Naive thymus-derived CD4-positive, alpha-beta T cell (primary cell): ENCODE measurements at regions of chrX and their contacts with region 1.

Region 1: DNA sequence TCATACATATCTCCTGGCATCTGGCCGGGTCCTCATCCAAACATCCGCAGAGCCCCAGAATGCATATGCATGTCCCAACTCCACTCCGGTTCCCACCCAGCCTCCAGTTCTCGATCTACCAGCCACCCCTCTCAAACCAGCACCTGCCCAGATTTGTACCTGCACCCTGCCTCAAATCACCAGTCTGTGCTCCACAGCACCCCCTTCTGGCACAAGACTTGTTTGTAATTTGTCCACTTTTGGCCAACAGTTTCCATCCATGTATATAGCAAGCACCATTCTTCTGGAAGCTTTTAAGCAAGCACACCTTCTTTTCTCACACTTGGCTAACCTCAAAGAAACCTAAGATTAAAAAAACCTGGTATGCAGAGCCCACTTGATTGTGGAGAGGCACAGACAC is 644.1 kb downstream of the MID1IP1 start:
- DNase-seq: peak in 4 of 9 donors; percentile 7 to 28 (median 25)
- ATAC-seq: no peak
- H3K4me3 ChIP-seq: no peak overlapping the region
- H3K4me3 Mint-ChIP-seq: no peak overlapping the region
- H3K27ac ChIP-seq: no peak overlapping the region
- H3K27ac Mint-ChIP-seq: peak overlapping the region in 2 of 9 donors; percentile 10 to 50
- H3K4me1 ChIP-seq: peaks cover 3 to 4% of the 10 kb centered on the region in 2 donors
- H3K4me1 Mint-ChIP-seq: peaks cover 19 to 46% (median 32%) of the 10 kb centered on the region in 7 donors
- H3K27me3 ChIP-seq: no peaks in the 10 kb centered on the region
- H3K27me3 Mint-ChIP-seq: no peaks in the 10 kb centered on the region

Region 2: GRCh38 chrX:39162322-39162735 is 283.0 kb before region 1 on chrX:
- CTCF ChIA-PET with region 1: no interaction called
- POLR2A ChIA-PET with region 1: no interaction called
- intact Hi-C with region 1: loop called (anchors 10 kb)
- DNase-seq: peak in 8 of 9 donors; percentile 17 to 47 (median 35)
- ATAC-seq: peak; percentile 83
- H3K4me3 ChIP-seq: no peak overlapping the region
- H3K4me3 Mint-ChIP-seq: peak overlapping the region; percentile 35 to 84 (median 77)
- H3K27ac ChIP-seq: no peak overlapping the region
- H3K27ac Mint-ChIP-seq: peak overlapping the region in 2 of 9 donors; percentile 50 to 81
- H3K4me1 ChIP-seq: no peaks in the 10 kb centered on the region
- H3K4me1 Mint-ChIP-seq: peaks cover 0 to 20% (median 10%) of the 10 kb centered on the region in 7 donors
- H3K27me3 ChIP-seq: no peaks in the 10 kb centered on the region
- H3K27me3 Mint-ChIP-seq: peaks cover 0 to 11% (median 5%) of the 10 kb centered on the region in 5 donors

Region 3: DNA sequence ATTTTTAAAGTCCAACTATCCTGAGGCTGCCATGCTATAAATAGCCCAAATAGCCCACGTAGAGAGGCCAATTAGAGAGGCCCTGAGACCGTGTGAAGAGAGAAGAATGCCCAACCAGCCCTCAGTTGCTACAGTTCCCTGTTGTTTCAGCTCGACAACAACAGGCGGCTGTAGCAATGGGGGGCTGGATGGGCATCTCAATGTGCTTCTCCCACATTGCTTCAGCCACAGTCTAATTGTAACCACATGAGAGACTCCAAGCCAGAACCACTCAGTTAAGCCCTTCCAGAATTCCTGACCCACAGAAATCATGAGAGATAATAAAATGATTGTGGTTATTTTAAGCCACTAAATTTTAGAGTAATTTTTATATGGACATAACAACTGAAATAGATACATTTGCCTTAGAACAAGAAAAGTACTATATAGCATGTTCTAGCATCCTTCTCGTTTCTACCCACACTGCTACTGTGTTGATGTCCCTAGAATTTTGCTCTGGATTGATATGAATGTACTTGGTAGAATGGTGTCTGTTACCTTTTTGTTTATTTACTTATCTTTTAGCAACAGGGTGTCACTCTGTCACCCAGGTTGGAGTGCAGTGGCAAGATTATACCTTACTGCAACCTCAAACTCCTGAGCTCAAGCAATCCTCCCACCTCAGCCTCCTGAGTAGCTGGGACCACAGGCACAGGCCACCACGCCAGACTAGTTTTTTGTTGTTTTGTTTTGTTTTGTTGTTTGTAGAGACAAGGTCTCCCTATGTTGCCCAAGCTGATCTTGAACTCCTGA is 216.0 kb after region 1 on chrX:
- CTCF ChIA-PET with region 1: no interaction called
- POLR2A ChIA-PET with region 1: no interaction called
- intact Hi-C with region 1: no loop called
- DNase-seq: no peak
- ATAC-seq: no peak
- H3K4me3 ChIP-seq: no peak overlapping the region
- H3K4me3 Mint-ChIP-seq: no peak overlapping the region
- H3K27ac ChIP-seq: no peak overlapping the region
- H3K27ac Mint-ChIP-seq: no peak overlapping the region
- H3K4me1 ChIP-seq: no peaks in the 10 kb centered on the region
- H3K4me1 Mint-ChIP-seq: no peaks in the 10 kb centered on the region
- H3K27me3 ChIP-seq: no peaks in the 10 kb centered on the region
- H3K27me3 Mint-ChIP-seq: no peaks in the 10 kb centered on the region

Region 4: GRCh38 chrX:39677978-39678791 is 232.8 kb after region 1 on chrX:
- CTCF ChIA-PET with region 1: no interaction called
- POLR2A ChIA-PET with region 1: no interaction called
- intact Hi-C with region 1: no loop called
- DNase-seq: no peak
- ATAC-seq: no peak
- H3K4me3 ChIP-seq: no peak overlapping the region
- H3K4me3 Mint-ChIP-seq: no peak overlapping the region
- H3K27ac ChIP-seq: no peak overlapping the region
- H3K27ac Mint-ChIP-seq: peak overlapping the region in 1 of 9 donors; percentile 25
- H3K4me1 ChIP-seq: no peaks in the 10 kb centered on the region
- H3K4me1 Mint-ChIP-seq: no peaks in the 10 kb centered on the region
- H3K27me3 ChIP-seq: no peaks in the 10 kb centered on the region
- H3K27me3 Mint-ChIP-seq: no peaks in the 10 kb centered on the region

Region 5: DNA sequence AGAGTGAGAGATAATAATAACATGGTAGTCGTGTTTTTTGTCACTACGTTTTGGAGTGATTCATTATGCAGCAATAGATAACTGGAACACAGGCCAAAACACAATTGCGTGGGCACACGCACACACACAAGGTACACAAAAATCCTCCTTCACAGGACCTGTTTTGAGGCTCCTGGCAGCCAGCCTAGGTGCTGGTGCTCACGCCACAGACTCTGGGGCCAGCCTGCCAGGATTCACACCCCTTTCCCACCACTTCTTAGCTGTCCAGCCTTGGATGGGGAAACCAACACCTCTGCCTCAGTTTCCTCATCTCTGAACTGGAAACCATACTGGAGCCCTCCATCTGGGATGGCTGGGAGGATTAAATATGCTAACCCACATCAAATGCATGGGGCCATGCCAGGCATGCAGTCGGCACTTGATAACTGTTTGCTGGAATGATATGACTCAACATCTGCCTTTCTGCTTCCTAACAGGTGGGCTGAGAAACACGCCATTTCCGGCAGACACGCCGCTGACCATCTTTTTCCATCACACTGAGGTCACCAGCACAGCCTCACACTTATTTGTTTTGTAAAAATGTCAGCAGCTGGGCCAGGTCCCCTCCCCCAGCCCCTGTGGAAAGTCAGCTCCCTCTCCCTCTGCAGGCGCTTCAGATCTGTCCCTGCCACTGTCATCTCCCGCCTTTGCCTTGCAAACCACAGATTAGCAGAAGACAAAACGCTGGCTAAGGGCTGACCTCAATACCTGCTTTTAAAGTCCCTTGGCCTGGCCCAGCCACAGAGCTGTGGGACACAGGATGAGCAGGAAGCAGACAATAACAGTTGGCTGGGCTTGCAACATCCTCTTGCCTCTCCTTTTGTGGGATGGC is 414.9 kb after region 1 on chrX:
- CTCF ChIA-PET with region 1: no interaction called
- POLR2A ChIA-PET with region 1: no interaction called
- intact Hi-C with region 1: no loop called
- DNase-seq: peak in 5 of 9 donors; percentile 16 to 74 (median 19)
- ATAC-seq: peak; percentile 40
- H3K4me3 ChIP-seq: no peak overlapping the region
- H3K4me3 Mint-ChIP-seq: peak overlapping the region in 6 of 10 donors; percentile 12 to 60 (median 48)
- H3K27ac ChIP-seq: no peak overlapping the region
- H3K27ac Mint-ChIP-seq: peak overlapping the region in 8 of 9 donors; percentile 37 to 89 (median 56)
- H3K4me1 ChIP-seq: peaks cover 17 to 19% of the 10 kb centered on the region in 2 donors
- H3K4me1 Mint-ChIP-seq: peaks cover 10 to 50% (median 26%) of the 10 kb centered on the region in 7 donors
- H3K27me3 ChIP-seq: no peaks in the 10 kb centered on the region
- H3K27me3 Mint-ChIP-seq: no peaks in the 10 kb centered on the region